Panc1 (cell line): ENCODE measurements at regions of chr20 and their contacts with region 1.

Region 1: DNA sequence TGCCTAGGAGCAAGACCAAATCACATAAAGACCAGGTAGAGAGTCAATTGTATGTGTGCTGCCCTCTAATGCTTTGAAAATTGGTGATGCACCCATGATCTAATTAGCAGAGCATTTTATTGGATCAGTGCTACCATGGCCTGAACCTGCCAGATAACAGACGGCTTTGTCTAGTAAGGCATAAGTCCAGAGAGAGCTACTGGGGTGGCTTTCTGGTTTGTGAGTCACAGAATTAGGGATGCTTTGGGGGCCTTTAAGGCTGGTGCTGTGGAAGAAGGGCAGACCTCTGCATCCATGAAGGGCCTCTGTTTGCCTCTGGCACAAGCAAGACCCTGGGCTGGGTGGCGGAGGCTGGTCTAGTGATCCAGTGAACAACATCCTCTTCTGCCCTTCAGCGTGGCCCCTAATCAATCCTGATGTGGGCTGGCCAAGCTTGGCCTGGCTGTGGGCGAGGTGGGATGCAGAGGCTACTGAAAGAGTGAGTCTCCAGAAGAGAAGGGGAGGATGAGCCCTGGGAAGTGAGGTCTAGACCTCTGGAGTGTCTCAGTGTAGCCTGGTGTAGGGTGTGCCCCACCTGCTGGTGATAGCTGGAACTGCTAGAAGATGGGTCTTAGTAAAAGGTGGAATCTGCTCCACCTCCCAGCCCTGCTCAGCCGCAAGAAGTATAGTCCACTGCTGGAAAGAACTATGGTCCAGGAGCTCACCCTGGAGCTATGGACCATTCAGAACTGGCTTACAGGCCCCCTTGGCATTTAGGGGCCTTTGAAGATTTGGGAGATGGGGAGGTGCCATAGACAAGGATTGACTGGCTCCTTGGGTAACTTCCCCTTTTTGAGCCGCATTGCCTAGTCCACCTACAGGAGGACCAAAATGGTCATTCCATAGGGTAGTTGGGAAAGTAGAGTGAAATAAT is 36.7 kb upstream of the AAR2 start:
- DNase-seq: peak; percentile 68
- ATAC-seq: peak; percentile 94
- H3K4me3 ChIP-seq: no peak overlapping the region
- H3K27ac ChIP-seq: no peak overlapping the region
- H3K4me1 ChIP-seq: no peaks in the 10 kb centered on the region
- H3K27me3 ChIP-seq: no peaks in the 10 kb centered on the region; the same call in none of the 2 replicates
- CTCF ChIP-seq: peak; percentile 94

Region 2: GRCh38 chr20:36155991-36156390 is 43.6 kb before region 1 on chr20:
- CTCF ChIA-PET with region 1: interaction called, 7 read pairs
- POLR2A ChIA-PET with region 1: no interaction called
- in situ Hi-C with region 1: no loop called
- intact Hi-C with region 1: loop called (anchors 1 kb)
- DNase-seq: no peak
- ATAC-seq: no peak
- H3K4me3 ChIP-seq: no peak overlapping the region
- H3K27ac ChIP-seq: no peak overlapping the region
- H3K4me1 ChIP-seq: no peaks in the 10 kb centered on the region; the same call in none of the 2 replicates
- H3K27me3 ChIP-seq: no peaks in the 10 kb centered on the region
- CTCF ChIP-seq: no peak

Region 3: DNA sequence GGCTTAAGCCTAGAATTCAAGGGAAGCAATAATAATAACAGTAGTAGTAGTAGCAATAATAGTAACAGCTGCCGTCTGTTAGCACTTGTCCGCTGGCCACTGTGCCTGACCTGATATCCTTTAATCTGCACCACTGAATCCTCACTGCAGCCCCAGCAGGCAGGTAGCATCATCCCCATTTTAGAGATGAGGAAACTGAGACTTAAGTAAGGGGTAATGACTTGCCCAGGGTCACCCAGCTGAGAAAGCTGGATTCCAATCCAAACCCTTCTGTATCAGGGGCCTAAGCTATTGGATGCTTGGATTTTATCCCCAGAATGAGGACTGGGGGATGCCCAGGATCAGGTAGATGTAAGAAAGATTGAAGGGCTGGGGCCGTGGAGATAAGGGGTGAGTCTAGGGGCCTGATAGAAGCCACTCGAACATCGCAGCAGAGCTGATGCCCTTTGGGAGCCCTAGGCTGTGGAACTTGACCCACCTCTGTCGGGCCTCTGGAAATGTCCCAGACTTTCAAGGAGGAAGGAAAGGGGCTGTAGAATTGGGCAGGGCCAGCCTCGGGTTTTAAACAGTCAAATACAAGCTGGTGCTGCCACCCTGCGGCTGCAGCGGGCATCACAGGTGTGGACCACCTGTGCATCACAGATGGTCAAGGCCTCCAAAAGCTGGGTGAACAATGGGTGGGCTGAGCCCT is 239.6 kb after region 1 on chr20:
- CTCF ChIA-PET with region 1: interaction called, 8 read pairs
- POLR2A ChIA-PET with region 1: interaction called, 3 read pairs
- in situ Hi-C with region 1: no loop called
- intact Hi-C with region 1: loop called (anchors 2 kb)
- DNase-seq: no peak
- ATAC-seq: peak; percentile 71
- H3K4me3 ChIP-seq: no peak overlapping the region
- H3K27ac ChIP-seq: no peak overlapping the region
- H3K4me1 ChIP-seq: no peaks in the 10 kb centered on the region; the same call in 1 of the 2 replicates
- H3K27me3 ChIP-seq: no peaks in the 10 kb centered on the region
- CTCF ChIP-seq: peak; percentile 93